ENCODE measurements at regions of chr22 and their contacts with region 1.

Region 1: DNA sequence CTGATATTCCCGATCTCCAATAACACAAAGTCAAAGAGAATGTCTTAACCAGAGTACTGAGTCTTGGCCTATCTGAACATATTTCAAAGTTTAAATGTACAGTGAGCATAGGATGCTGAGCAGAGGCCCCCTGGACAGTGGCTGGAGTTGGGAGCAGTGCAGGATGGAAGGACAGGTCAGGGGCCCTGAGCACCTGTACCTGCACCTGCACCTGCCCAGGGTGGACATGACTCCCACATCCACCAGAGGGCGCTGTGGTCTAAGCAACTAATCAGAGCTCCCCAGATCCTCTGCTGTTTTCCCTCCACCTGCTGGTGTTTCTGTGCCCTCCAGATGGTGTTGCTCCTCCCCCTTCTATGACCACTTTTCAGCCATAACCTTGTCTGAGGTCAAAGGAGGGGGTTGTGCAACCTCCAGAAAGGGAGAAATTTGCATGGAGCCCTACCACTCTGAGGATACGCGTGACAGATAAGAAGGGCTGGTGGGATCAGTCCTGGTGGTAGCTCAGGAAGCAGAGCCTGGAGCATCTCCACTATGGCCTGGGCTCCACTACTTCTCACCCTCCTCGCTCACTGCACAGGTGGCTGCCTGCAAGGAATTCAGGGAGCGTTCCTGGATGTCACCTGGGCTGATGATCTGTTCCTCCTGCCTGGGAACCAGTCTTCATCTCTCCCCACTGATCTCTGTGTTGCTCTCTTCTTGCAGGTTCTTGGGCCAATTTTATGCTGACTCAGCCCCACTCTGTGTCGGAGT is 49.1 kb upstream of the VPREB1 start:
- DNase-seq: peak; percentile 90
- H3K4me3 Mint-ChIP-seq: no peak overlapping the region
- H3K27ac Mint-ChIP-seq: no peak overlapping the region
- H3K4me1 Mint-ChIP-seq: no peaks in the 10 kb centered on the region
- H3K27me3 Mint-ChIP-seq: peaks cover 47% of the 10 kb centered on the region

Region 2: DNA sequence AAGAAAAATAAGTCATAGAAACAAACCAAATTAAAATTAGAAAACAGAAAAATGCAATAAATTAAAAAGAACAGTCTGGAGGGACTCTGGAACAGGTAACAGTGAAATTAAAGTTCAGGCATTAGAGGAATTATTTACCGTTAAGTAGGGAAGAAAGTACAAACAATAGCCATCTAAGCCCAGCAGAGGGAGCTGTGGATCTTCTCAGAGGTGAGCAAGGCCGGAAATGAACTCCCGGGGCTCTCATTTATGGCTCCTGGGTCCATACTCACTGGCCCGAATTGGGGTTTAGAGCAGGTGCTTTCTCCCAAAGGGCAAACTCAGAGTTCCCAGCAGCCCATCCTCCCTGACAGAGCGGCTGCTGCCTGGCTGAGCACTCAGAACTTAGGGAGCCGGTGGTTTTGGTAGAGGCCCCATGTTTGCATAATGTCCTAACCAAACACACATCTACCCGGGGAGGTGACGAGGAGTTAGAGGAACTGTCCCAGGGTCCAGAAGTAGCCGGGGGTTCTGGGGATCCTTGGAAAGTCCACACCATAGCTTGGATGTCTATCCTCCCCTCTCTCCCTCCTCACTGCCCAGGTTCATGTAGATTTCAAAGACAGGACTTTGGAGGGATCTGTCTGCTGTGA is 38.6 kb before region 1 on chr22:
- CTCF ChIA-PET with region 1: interaction called, 13 read pairs
- DNase-seq: peak; percentile 80
- H3K4me3 Mint-ChIP-seq: no peak overlapping the region
- H3K27ac Mint-ChIP-seq: no peak overlapping the region
- H3K4me1 Mint-ChIP-seq: peaks cover 6% of the 10 kb centered on the region
- H3K27me3 Mint-ChIP-seq: peaks cover 30% of the 10 kb centered on the region

Region 3: GRCh38 chr22:22182218-22182989 is 13.0 kb before region 1 on chr22:
- CTCF ChIA-PET with region 1: interaction called, 16 read pairs
- DNase-seq: no peak
- H3K4me3 Mint-ChIP-seq: no peak overlapping the region
- H3K27ac Mint-ChIP-seq: no peak overlapping the region
- H3K4me1 Mint-ChIP-seq: peaks cover 5% of the 10 kb centered on the region
- H3K27me3 Mint-ChIP-seq: peaks cover 42% of the 10 kb centered on the region

Region 4: DNA sequence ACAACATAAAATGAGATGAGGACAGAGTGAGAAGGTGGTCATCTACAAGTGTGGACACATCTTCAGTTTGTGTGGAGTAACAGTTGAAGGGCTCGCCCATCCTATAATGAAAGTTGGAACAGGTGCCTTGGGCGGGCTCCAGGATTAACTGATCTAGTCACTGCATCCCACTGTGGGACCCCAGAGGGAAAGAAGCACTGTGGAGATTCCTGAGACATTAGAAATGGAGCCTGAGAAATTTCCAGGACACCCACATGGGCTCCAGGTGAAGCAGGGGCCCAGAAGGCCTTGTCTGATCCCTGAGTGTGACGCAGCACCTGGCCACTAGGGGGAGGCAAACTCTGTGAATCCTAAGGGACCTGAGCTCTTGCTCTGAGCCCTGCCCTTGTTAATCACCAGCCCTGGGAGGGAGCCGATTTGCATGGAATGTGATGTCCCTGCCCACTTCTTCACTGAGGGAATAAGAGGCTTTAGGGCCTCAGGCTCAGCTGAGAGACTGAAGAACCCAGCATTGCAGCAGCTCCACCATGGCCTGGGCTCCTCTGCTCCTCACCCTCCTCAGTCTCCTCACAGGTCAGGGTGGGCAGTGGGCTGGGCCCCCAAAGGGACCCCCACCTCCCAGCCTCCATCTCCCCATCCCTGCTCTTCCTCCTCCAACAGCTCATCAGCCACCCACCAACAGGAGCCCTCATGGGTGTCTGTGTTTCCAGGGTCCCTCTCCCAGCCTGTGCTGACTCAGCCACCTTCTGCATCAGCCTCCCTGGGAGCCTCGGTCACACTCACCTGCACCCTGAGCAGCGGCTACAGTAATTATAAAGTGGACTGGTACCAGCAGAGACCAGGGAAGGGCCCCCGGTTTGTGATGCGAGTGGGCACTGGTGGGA is 147.5 kb after region 1 on chr22:
- CTCF ChIA-PET with region 1: interaction called, 11 read pairs
- DNase-seq: peak; percentile 78
- H3K4me3 Mint-ChIP-seq: no peak overlapping the region
- H3K27ac Mint-ChIP-seq: no peak overlapping the region
- H3K4me1 Mint-ChIP-seq: peaks cover 6% of the 10 kb centered on the region
- H3K27me3 Mint-ChIP-seq: peaks cover 35% of the 10 kb centered on the region